Common myeloid progenitor, CD34-positive (primary cell): ENCODE measurements at regions of chr15 and their contacts with region 1.

Region 1: GRCh38 chr15:80970018-80970658 is 19.5 kb downstream of the MESD start:
- DNase-seq: peak; percentile 51 to 80 (median 71)
- H3K4me3 ChIP-seq: no peak overlapping the region
- H3K27ac ChIP-seq: no peak overlapping the region
- H3K4me1 ChIP-seq: no peaks in the 10 kb centered on the region
- H3K27me3 ChIP-seq: no peaks in the 10 kb centered on the region

Region 2: DNA sequence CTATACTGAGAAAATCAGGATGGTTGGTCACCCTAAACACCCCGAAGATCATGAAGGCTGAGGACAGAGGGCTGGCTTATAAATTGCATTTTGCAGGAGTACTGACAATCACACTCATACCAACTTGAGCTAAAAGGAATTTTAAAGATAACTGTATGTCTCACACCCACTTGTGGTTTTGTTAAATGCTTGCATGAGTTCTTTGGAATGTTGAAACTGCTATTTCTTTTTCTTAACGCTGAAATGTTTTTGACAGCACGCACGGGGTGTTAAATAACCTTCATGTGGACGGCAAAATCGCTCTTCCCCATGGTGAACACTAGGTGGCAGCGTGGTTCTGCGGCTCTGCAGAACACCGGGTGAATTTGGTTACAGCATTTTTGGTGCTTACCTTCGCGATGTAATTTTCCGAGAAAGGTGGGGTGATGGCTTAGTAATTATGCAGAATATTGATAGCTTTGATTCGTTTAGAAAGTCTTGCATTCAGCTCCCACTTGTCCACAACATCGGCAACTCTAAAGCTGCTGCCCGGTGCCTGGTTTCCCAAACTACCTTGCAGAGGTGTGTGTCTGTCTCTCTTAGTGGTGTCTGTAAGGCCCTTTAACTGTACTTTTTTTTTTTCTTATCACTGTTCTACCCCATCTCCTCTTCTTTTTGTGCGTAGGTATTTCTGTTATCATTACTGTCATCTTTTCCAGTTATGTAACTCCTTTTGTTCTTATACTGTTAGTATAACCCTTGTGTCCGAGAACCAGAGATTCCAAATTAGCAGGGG is 514.3 kb before region 1 on chr15:
- CTCF ChIA-PET with region 1: interaction called, 16 read pairs
- POLR2A ChIA-PET with region 1: interaction called, 3 read pairs
- DNase-seq: peak; percentile 72 to 88 (median 83)
- H3K4me3 ChIP-seq: no peak overlapping the region
- H3K27ac ChIP-seq: no peak overlapping the region
- H3K4me1 ChIP-seq: no peaks in the 10 kb centered on the region
- H3K27me3 ChIP-seq: peaks cover 0 to 6% (median 2%) of the 10 kb centered on the region in 5 experiments